ENCODE measurements at regions of chr1 and their contacts with region 1.

Region 1: DNA sequence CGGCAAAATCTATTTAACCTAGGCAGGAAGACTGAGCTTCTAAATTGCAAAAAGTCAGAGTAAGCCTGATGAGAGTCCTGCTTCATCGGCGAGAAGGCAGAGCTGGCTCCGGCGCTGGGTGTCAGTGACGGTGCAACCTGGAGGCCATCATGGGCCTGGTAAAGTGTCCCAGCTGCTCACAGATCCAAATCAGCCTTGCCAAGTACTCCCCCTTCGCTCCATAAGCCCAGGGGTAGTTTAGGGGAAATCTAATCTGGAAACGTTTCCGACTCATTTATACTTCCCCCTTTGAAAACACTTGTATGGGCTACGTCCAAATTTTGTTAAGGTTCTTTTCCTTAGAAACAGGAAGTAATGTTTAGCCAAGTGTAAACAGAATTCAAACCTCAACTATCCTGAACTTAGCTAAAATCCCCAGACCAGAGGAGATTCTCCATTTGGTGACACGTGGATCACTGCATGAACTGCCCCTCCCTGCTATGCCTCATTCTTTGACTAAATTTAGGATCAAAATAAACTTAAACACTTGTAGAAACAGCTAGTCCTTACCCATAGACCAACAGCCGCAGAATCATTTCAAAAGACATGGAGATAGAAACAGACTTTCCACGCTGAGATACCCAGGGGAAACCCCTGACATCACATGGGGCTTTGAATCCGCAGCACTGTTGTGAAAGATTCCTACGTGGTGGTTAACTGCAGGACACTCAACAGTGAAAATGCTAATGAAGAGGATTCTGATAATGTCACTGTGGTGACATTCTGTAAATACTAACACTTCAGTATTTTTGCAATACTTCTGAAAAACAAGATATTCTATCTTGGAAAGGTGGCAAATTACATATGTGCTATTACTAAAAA is 172.7 kb downstream of the TGFBR3 start:
- DNase-seq: peak; percentile 85
- H3K4me3 Mint-ChIP-seq: peak overlapping the region; percentile 55
- H3K27ac Mint-ChIP-seq: peak overlapping the region; percentile 88
- H3K4me1 Mint-ChIP-seq: peaks cover 35% of the 10 kb centered on the region
- H3K27me3 Mint-ChIP-seq: no peaks in the 10 kb centered on the region

Region 2: GRCh38 chr1:91523482-91523881 is 189.7 kb before region 1 on chr1:
- intact Hi-C with region 1: loop called (anchors 2 kb)
- DNase-seq: peak; percentile 71
- H3K4me3 Mint-ChIP-seq: no peak overlapping the region
- H3K27ac Mint-ChIP-seq: peak overlapping the region; percentile 22
- H3K4me1 Mint-ChIP-seq: peaks cover 28% of the 10 kb centered on the region
- H3K27me3 Mint-ChIP-seq: no peaks in the 10 kb centered on the region

Region 3: DNA sequence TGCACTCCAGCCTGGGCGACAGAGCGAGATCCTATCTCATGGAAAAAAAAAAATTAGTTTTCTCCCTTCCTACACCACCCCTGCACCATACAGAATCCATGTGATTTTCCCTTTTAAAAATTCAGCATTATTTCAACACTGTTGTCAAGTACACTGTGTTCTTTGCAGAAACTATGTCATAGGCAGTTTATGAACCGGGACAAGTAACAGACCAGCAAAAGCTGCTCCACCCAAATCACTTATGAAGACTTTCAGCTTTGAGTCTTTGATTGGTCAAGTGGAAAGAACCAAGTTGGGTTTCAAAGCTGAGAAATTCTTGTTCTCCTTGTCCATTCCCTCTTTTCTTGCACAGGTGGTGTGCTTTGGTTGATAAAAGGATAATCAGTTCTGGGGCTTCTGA is 39.6 kb before region 1 on chr1:
- intact Hi-C with region 1: loop called (anchors 1 kb)
- DNase-seq: no peak
- H3K4me3 Mint-ChIP-seq: no peak overlapping the region
- H3K27ac Mint-ChIP-seq: peak overlapping the region; percentile 88
- H3K4me1 Mint-ChIP-seq: peaks cover 33% of the 10 kb centered on the region
- H3K27me3 Mint-ChIP-seq: no peaks in the 10 kb centered on the region

Region 4: GRCh38 chr1:91732291-91733107 is 19.3 kb after region 1 on chr1:
- intact Hi-C with region 1: loop called (anchors 1 kb)
- DNase-seq: no peak
- H3K4me3 Mint-ChIP-seq: peak overlapping the region; percentile 17
- H3K27ac Mint-ChIP-seq: peak overlapping the region; percentile 69
- H3K4me1 Mint-ChIP-seq: peaks cover 45% of the 10 kb centered on the region
- H3K27me3 Mint-ChIP-seq: peaks cover 2% of the 10 kb centered on the region

Region 5: GRCh38 chr1:91815986-91816385 is 102.8 kb after region 1 on chr1:
- intact Hi-C with region 1: no loop called
- DNase-seq: no peak
- H3K4me3 Mint-ChIP-seq: no peak overlapping the region
- H3K27ac Mint-ChIP-seq: no peak overlapping the region
- H3K4me1 Mint-ChIP-seq: peaks cover 15% of the 10 kb centered on the region
- H3K27me3 Mint-ChIP-seq: peaks cover 5% of the 10 kb centered on the region